HEK293 (cell line): ENCODE measurements at regions of chr13 and their contacts with region 1.

Region 1: DNA sequence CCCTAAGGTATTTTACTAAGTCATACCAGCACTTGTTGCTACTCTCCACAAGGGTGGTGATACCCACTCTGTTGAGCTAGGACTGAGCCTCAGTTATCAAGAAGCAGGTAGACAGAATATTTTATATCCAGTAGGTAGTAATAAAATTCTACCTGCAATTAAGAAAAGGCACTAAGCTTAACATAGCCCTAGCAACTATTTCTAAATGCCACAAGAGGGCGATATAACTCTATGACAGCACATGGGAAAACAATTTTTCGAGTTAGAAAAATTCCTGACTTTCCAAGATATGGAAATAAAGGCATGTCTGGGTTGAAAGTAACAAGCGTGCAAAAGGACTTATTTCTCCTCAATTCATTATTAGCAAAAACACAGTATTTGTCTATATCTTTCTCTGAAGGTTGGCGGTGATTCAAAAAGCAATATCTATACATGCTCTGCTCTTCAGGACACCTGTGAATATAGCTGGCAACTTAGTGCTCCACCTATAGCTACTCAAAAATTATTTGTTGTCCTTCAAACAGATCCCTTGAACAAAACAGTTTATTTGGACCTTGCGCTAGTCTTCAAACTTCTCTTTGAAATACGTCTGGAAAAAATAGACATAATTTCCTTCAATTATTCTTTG is 14.7 kb downstream of the CCDC169 start:
- H3K4me3 ChIP-seq: no peak overlapping the region
- H3K27ac ChIP-seq: no peak overlapping the region
- H3K4me1 ChIP-seq: no peaks in the 10 kb centered on the region
- CTCF ChIP-seq: no peak

Region 2: GRCh38 chr13:36293503-36293902 is 10.6 kb after region 1 on chr13:
- CTCF ChIA-PET with region 1: interaction called, 13 read pairs
- POLR2A ChIA-PET with region 1: no interaction called
- H3K4me3 ChIP-seq: no peak overlapping the region
- H3K27ac ChIP-seq: no peak overlapping the region
- H3K4me1 ChIP-seq: no peaks in the 10 kb centered on the region
- CTCF ChIP-seq: no peak

Region 3: DNA sequence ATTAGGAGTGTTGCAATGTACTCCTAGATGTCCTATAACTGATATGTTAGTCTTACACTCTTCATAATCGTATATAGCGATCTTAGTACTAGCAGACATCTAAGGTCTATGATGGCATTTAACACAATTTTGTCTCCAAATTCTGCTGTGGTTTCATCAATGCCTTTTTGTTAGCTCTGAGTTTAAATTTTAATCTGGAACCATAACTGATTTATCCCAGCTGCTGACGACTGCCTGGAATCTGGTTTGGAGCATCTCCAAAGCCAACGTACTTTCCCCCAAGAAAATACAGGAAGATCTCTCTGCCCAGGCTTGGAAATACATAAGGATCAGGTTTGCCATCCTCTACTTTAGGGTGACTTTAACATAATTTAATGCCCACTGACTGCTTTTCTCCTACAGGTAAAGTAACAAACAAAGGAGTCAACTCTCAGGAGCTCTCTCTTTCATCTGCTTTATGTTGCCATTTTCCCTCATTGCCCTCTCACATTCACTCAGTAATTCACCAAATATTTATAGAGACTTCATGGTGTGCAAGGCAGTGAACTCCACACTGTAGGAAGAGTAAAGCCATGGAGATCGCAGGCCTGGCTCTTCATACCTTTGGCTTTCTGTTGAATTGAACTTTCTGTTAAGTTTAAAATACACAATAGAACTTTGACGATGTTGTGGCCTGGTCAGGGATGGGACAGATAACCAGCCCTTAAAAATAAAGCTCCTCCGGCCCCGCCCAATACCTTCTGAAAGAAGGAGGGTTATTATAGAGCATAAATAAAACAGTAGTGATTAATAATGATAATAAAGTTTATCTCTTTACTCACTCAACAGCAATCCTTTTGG is 86.6 kb after region 1 on chr13:
- CTCF ChIA-PET with region 1: no interaction called
- POLR2A ChIA-PET with region 1: no interaction called
- H3K4me3 ChIP-seq: no peak overlapping the region
- H3K27ac ChIP-seq: no peak overlapping the region
- H3K4me1 ChIP-seq: no peaks in the 10 kb centered on the region
- CTCF ChIP-seq: no peak

Region 4: DNA sequence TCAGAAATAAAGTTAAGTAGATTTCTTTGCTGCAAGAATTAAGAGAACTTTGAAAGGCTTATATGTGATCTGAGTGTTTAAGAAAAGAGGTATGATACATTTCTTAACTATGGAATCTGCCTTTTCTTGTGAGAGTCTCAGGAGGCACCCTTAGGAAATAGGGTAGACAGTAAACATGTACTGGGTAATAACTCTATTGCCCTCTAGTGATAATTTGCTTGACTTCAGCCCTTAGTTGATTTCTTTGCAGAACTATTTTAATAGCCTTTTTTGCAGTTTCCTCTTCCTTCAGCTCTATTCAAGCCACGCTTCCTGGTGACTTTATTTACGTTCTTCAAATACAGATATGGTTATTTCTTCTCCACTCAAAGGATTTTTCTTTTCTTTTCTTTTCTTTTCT is 112.3 kb after region 1 on chr13:
- CTCF ChIA-PET with region 1: interaction called, 14 read pairs
- POLR2A ChIA-PET with region 1: no interaction called
- H3K4me3 ChIP-seq: no peak overlapping the region
- H3K27ac ChIP-seq: no peak overlapping the region
- H3K4me1 ChIP-seq: no peaks in the 10 kb centered on the region
- CTCF ChIP-seq: 0 out of 2 replicates have a peak, but pooled peaks have one; percentile 25

Region 5: DNA sequence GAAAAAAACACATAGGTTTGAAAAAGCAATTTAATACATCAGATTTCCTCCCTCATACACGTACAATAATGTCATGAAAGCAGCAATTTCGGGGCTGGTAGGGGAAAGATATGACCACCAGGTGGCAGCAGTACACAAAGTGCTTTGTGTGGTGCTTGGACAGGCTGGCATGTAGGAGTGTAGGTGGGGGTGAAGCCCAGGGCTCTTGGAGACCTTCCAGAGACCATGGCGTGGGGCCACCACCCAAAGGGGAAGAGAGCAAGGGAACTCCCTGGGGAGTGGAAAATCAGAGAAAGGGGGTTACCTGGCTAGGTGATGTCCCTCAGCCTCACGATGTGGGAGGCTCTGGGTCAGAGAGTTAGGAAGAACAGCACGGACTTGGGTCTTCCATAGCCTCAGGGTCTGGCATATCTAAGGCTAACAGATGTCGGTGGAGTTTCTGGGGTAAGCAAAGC is 137.5 kb after region 1 on chr13:
- CTCF ChIA-PET with region 1: interaction called, 28 read pairs
- POLR2A ChIA-PET with region 1: no interaction called
- H3K4me3 ChIP-seq: no peak overlapping the region
- H3K27ac ChIP-seq: no peak overlapping the region
- H3K4me1 ChIP-seq: no peaks in the 10 kb centered on the region
- CTCF ChIP-seq: 0 out of 2 replicates have a peak, but pooled peaks have one; percentile 31

Region 6: DNA sequence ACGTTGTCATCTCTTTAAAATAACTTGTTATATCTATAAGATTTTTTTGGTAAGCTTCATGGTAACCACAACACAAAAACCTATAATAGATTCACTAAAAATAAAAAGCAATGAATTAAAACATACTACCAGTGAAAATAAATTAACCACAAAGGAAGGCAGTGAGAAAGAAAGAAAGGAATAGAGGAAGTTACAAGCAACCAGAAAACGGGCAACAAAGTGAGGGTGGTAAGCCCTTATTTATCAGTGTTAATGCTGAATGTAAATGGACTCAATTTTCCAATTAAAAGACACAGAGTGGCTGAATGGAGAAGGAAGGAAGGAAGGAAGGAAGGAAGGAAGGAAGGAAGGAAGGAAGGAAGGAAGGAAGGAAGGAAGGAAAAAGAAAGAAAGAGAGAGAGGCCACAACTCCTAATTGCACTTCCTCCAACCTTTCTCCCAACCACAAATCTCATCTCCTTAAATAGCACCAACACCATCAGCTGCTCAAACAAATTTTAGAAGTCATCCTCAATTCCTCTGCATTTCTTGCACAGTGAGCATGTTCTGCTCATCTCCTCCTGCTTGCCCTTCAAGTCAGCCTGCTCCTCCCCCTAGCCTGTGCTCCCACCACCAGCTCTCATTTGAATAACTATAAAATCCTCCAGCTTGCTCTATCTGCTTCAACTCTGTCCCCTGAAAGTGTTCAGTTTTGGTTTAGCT is 197.9 kb after region 1 on chr13:
- CTCF ChIA-PET with region 1: no interaction called
- POLR2A ChIA-PET with region 1: no interaction called
- H3K4me3 ChIP-seq: no peak overlapping the region
- H3K27ac ChIP-seq: no peak overlapping the region
- H3K4me1 ChIP-seq: no peaks in the 10 kb centered on the region
- CTCF ChIP-seq: no peak

Region 7: GRCh38 chr13:36736119-36736726 is 453.3 kb after region 1 on chr13:
- CTCF ChIA-PET with region 1: interaction called, 13 read pairs
- POLR2A ChIA-PET with region 1: interaction called, 11 read pairs
- H3K4me3 ChIP-seq: no peak overlapping the region
- H3K27ac ChIP-seq: no peak overlapping the region
- H3K4me1 ChIP-seq: no peaks in the 10 kb centered on the region
- CTCF ChIP-seq: no peak